CD8-positive, alpha-beta memory T cell (primary cell): ENCODE measurements at regions of chr2 and their contacts with region 1.

Region 1: DNA sequence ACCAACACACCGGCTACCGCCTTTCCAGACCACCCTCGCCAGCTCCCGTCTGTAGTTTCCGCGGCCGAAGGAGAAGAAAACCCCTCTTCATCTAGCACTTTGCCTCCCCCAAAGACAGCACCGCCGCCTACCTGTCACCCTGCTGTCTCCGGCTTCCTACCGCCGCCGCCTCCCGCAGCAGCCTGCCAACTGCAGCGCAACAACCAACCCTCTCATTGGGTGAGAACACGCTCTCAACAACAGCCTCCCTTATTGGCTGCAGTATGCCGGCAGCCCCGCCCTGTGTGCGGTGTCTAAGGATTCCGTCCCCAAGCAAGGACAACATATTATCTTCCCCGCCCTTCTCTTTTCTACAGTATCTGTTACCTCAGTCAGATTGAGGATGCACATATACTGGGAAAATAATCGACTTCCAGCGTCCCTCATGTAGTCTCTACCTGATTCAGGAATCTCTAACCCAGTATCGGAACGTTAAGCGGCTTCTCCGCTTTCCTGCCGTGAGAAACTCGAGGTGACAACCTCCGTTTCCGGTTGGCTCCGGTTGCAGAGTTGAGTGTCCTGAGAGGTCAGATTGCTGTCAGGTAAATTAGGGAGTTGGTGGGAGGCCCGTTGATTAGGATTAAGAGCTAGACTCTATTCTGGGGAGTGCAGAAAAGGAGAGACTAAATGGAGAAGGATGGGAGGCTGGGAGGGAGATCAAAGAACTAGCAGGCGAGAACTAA is at the starts of genes HYCC2 and NDUFB3:
- DNase-seq: peak; percentile 88 to 96 (median 94)
- H3K4me3 ChIP-seq: peak within 1 kb of the TSS; percentile 88
- H3K4me3 Mint-ChIP-seq: peak within 1 kb of the TSS; percentile 92 to 99 (median 94)
- H3K27ac ChIP-seq: peak within 1 kb of the TSS; percentile 87
- H3K27ac Mint-ChIP-seq: peak within 1 kb of the TSS; percentile 95 to 99 (median 96)
- H3K4me1 ChIP-seq: peaks cover 47% of the 10 kb centered on the region
- H3K4me1 Mint-ChIP-seq: peaks cover 54 to 67% (median 65%) of the 10 kb centered on the region in 3 donors
- H3K27me3 ChIP-seq: no peaks in the 10 kb centered on the region
- H3K27me3 Mint-ChIP-seq: peaks cover 0 to 1% of the 10 kb centered on the region in 2 donors
- total RNA-seq, gene HYCC2: 25.5 to 27.7 TPM
- total RNA-seq, gene NDUFB3: 129 to 145 TPM

Region 2: DNA sequence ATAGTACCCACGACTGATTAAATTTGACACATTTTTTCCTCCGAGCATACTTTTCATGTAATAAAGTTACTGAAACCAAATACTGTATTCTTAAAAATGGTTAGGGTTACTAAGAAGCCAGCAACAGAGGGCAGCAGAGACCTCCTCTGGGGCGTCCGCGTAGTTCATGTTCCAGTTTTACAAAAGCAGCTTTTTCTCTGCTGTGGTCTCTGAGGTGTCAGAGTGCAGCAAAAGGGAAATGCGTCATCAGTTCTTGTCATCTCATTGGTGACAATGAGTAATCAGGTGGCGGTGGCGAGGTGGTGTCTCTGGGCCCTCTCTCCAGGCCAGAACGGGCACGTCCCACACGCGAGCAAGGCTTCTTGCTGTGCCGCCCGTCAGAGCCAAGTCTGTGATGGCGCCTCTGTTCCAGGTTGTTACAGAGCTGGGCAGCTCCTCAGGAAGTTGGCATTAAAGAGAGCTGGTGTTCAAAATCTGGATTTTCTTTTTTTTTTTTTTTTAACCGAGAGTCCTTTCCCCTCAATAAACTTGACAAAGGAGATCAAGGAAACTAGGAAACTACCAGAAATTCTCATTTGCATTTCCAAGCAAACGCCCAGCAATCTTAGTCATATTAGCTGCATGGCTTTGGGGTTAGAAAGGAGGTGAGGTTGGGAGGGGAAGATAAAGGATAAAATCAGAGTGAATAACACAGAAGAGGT is 358.5 kb before region 1 on chr2:
- CTCF ChIA-PET with region 1: interaction called, 19 read pairs
- POLR2A ChIA-PET with region 1: interaction called, 4 read pairs
- DNase-seq: peak; percentile 88 to 96 (median 94)
- H3K4me3 ChIP-seq: peak overlapping the region; percentile 14
- H3K4me3 Mint-ChIP-seq: peak overlapping the region; percentile 53 to 84 (median 77)
- H3K27ac ChIP-seq: peak overlapping the region; percentile 65
- H3K27ac Mint-ChIP-seq: peak overlapping the region; percentile 96 to 100 (median 98)
- H3K4me1 ChIP-seq: peaks cover 7% of the 10 kb centered on the region
- H3K4me1 Mint-ChIP-seq: peaks cover 12 to 15% (median 13%) of the 10 kb centered on the region in 3 donors
- H3K27me3 ChIP-seq: no peaks in the 10 kb centered on the region
- H3K27me3 Mint-ChIP-seq: peaks cover 2 to 18% of the 10 kb centered on the region in 2 donors

Region 3: GRCh38 chr2:200901459-200902072 is 170.1 kb before region 1 on chr2:
- CTCF ChIA-PET with region 1: interaction called, 12 read pairs
- POLR2A ChIA-PET with region 1: interaction called, 3 read pairs
- DNase-seq: peak; percentile 58 to 84 (median 71)
- H3K4me3 ChIP-seq: no peak overlapping the region
- H3K4me3 Mint-ChIP-seq: no peak overlapping the region
- H3K27ac ChIP-seq: no peak overlapping the region
- H3K27ac Mint-ChIP-seq: peak overlapping the region; percentile 1 to 92 (median 55)
- H3K4me1 ChIP-seq: no peaks in the 10 kb centered on the region
- H3K4me1 Mint-ChIP-seq: peaks cover 3 to 14% (median 9%) of the 10 kb centered on the region in 3 donors
- H3K27me3 ChIP-seq: no peaks in the 10 kb centered on the region
- H3K27me3 Mint-ChIP-seq: no peaks in the 10 kb centered on the region

Region 4: GRCh38 chr2:200963124-200963917 is 108.3 kb before region 1 on chr2 and contains the start of gene ORC2:
- CTCF ChIA-PET with region 1: interaction called, 31 read pairs
- POLR2A ChIA-PET with region 1: interaction called, 11 read pairs
- DNase-seq: peak; percentile 89 to 96 (median 93)
- H3K4me3 ChIP-seq: peak within 1 kb of the TSS; percentile 93
- H3K4me3 Mint-ChIP-seq: peak within 1 kb of the TSS; percentile 97 to 99 (median 97)
- H3K27ac ChIP-seq: peak within 1 kb of the TSS; percentile 74
- H3K27ac Mint-ChIP-seq: peak within 1 kb of the TSS; percentile 98 to 100 (median 98)
- H3K4me1 ChIP-seq: peaks cover 32% of the 10 kb centered on the region
- H3K4me1 Mint-ChIP-seq: peaks cover 59 to 73% (median 70%) of the 10 kb centered on the region in 3 donors
- H3K27me3 ChIP-seq: no peaks in the 10 kb centered on the region
- H3K27me3 Mint-ChIP-seq: peaks cover 0 to 2% of the 10 kb centered on the region in 2 donors
- total RNA-seq, gene ORC2: 47.9 to 51.9 TPM

Region 5: GRCh38 chr2:201057087-201057521 is 14.5 kb before region 1 on chr2:
- CTCF ChIA-PET with region 1: interaction called, 17 read pairs
- POLR2A ChIA-PET with region 1: interaction called, 5 read pairs
- DNase-seq: no peak
- H3K4me3 ChIP-seq: no peak overlapping the region
- H3K4me3 Mint-ChIP-seq: no peak overlapping the region
- H3K27ac ChIP-seq: no peak overlapping the region
- H3K27ac Mint-ChIP-seq: peak overlapping the region in 6 of 8 donors; percentile 23 to 63 (median 34)
- H3K4me1 ChIP-seq: no peaks in the 10 kb centered on the region
- H3K4me1 Mint-ChIP-seq: peaks cover 33 to 55% (median 52%) of the 10 kb centered on the region in 3 donors
- H3K27me3 ChIP-seq: no peaks in the 10 kb centered on the region
- H3K27me3 Mint-ChIP-seq: no peaks in the 10 kb centered on the region